ENCODE measurements at regions of chr4 and their contacts with region 1.

Region 1: GRCh38 chr4:185203486-185204237 is at the start of gene CFAP97:
- DNase-seq: peak; percentile 96 to 98 (median 97)
- ATAC-seq: peak; percentile 94 to 96
- H3K4me3 ChIP-seq: peak within 1 kb of the TSS; percentile 88
- H3K27ac ChIP-seq: peak within 1 kb of the TSS; percentile 88
- H3K4me1 ChIP-seq: peaks cover 8% of the 10 kb centered on the region
- H3K27me3 ChIP-seq: no peaks in the 10 kb centered on the region
- total RNA-seq, gene CFAP97: 16.4 to 26.9 (median 18.4) TPM

Region 2: GRCh38 chr4:185304944-185305690 is 101.5 kb after region 1 on chr4:
- intact Hi-C with region 1: loop called in 1 of 4 experiments (anchors 10 kb)
- DNase-seq: no peak
- ATAC-seq: peak; percentile 52 to 70
- H3K4me3 ChIP-seq: no peak overlapping the region
- H3K27ac ChIP-seq: no peak overlapping the region
- H3K4me1 ChIP-seq: peaks cover 4% of the 10 kb centered on the region
- H3K27me3 ChIP-seq: no peaks in the 10 kb centered on the region

Region 3: GRCh38 chr4:185343726-185344581 is 140.3 kb after region 1 on chr4:
- intact Hi-C with region 1: no loop called
- DNase-seq: no peak
- ATAC-seq: peak; percentile 47 to 75
- H3K4me3 ChIP-seq: no peak overlapping the region
- H3K27ac ChIP-seq: peak overlapping the region; percentile 1
- H3K4me1 ChIP-seq: peaks cover 4% of the 10 kb centered on the region
- H3K27me3 ChIP-seq: no peaks in the 10 kb centered on the region

Measured in right cardiac atrium (tissue), 5 donors.